Breast epithelium (tissue), 4 donors: ENCODE measurements at regions of chr13 and their contacts with region 1.

Region 1: GRCh38 chr13:104442541-104442940 is 1376.3 kb upstream of the SLC10A2 start:
- DNase-seq: no peak
- H3K4me3 ChIP-seq: no peak overlapping the region
- H3K27ac ChIP-seq: no peak overlapping the region
- H3K4me1 ChIP-seq: no peaks in the 10 kb centered on the region
- H3K27me3 ChIP-seq: no peaks in the 10 kb centered on the region
- CTCF ChIP-seq: no peak
- POLR2A ChIP-seq: no peak

Region 2: GRCh38 chr13:104431895-104432294 is 10.6 kb before region 1 on chr13:
- intact Hi-C with region 1: loop called (anchors 1 kb)
- DNase-seq: no peak
- H3K4me3 ChIP-seq: no peak overlapping the region
- H3K27ac ChIP-seq: no peak overlapping the region
- H3K4me1 ChIP-seq: no peaks in the 10 kb centered on the region
- H3K27me3 ChIP-seq: no peaks in the 10 kb centered on the region
- CTCF ChIP-seq: no peak
- POLR2A ChIP-seq: no peak